Activated CD4-positive, alpha-beta T cell treated with anti-CD3 and anti-CD28 coated beads for 36 hours (primary cell): ENCODE measurements at regions of chr2 and their contacts with region 1.

Region 1: DNA sequence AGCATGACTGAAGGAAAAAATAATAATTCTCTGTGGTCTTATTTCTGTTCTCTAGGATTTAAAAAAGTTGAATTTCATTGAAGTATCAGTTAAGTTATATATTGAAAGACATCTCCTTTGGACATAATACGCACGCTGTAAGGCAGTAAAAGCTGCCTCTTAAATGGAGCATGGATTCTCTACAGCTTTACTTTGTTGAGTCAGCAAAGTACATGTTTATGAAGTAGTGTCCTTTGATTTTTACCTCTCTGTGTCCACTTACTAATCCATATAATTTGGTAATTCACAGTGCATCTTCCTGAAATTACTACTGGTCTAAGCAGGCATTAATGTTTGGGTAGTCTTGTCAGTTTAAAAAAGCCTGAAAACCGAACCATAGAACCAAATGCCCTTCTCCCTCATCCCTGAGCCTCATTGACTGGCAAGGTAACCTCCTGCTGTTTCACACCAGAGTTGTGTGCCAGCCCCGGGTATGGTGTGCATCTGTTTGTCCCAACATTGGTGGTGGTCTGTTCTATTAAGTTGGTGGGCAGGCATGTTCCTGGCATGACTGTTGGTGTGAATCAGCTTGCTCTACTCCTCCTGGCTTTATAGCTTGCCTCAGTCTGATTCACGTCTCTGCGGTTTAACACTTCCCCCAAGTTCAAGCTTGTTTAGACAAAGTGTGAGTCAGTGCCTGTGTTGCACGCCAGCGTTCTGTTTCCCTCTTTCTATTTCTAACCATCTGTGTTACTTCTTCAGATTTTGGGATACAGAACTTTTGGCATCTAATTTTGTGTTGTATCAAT is 71.0 kb upstream of the ITM2C start:
- DNase-seq: peak; percentile 83
- ATAC-seq: peak; percentile 92
- H3K4me3 Mint-ChIP-seq: peak overlapping the region; percentile 66
- H3K27ac Mint-ChIP-seq: no peak overlapping the region
- H3K4me1 Mint-ChIP-seq: peaks cover 59% of the 10 kb centered on the region
- H3K27me3 Mint-ChIP-seq: no peaks in the 10 kb centered on the region

Region 2: DNA sequence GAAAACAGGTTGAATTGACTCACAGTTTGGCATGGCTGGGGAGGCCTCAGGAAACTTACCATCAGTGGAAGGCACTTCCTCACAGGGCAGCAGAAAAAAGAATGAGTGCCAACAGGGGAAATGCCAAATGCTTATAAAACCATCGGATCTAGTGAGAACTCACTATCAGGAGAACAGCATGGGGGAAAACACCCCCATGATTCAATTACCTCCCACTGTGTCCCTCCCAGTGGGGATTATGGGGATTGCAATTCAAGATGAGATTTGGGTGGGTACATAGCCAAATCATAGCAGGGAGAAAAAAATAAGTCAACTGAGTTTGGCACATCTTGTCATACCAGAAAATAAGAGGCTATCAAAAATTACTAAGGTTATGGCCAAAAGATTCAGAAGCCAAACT is 968.3 kb before region 1 on chr2:
- CTCF ChIA-PET with region 1: no interaction called
- POLR2A ChIA-PET with region 1: no interaction called
- intact Hi-C with region 1: loop called in 1 of 2 experiments (anchors 1 kb)
- DNase-seq: no peak
- ATAC-seq: no peak
- H3K4me3 Mint-ChIP-seq: no peak overlapping the region
- H3K27ac Mint-ChIP-seq: no peak overlapping the region
- H3K4me1 Mint-ChIP-seq: peaks cover 21% of the 10 kb centered on the region
- H3K27me3 Mint-ChIP-seq: no peaks in the 10 kb centered on the region

Region 3: GRCh38 chr2:230403746-230404145 is 390.0 kb before region 1 on chr2:
- CTCF ChIA-PET with region 1: no interaction called
- POLR2A ChIA-PET with region 1: no interaction called
- intact Hi-C with region 1: no loop called
- DNase-seq: no peak
- ATAC-seq: no peak
- H3K4me3 Mint-ChIP-seq: no peak overlapping the region
- H3K27ac Mint-ChIP-seq: no peak overlapping the region
- H3K4me1 Mint-ChIP-seq: peaks cover 10% of the 10 kb centered on the region
- H3K27me3 Mint-ChIP-seq: no peaks in the 10 kb centered on the region

Region 4: DNA sequence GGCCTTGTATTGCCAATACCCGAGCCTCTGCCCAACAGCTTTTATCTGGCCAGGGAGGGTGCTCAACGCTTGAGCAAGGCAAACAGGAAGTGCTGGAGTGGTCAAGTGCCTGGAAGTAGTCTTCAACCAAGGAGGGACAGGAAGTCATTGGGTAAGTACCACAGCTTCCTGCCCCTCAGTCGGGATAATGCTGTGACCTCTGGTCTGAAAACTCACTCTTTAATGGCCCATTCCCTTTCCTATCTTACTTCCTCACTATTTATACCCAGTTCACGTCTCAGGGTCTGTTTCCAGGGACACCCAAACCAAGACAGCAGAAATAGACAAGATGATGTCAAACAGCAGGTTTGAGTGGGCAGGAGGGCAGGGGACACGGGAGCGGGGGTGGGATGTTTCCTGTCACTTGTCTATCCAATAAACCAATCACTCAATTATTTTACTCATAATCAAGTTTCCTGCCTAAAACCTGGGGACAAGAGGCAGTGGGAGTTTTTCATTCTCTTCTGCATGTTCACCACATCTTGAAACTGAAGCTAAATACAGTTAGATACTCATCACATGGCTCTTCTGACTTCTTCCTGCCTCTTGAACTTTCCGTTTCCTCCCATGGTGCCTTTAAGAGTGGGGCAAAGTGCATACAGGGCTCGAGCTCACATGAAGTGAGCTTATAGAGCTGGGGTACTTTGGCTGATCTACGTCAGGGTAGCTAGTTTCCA is 150.0 kb before region 1 on chr2:
- CTCF ChIA-PET with region 1: interaction called, 4 read pairs
- POLR2A ChIA-PET with region 1: interaction called, 10 read pairs
- intact Hi-C with region 1: loop called in 1 of 2 experiments (anchors 1 kb)
- DNase-seq: peak; percentile 84
- ATAC-seq: peak; percentile 94
- H3K4me3 Mint-ChIP-seq: peak overlapping the region; percentile 24
- H3K27ac Mint-ChIP-seq: peak overlapping the region; percentile 97
- H3K4me1 Mint-ChIP-seq: peaks cover 39% of the 10 kb centered on the region
- H3K27me3 Mint-ChIP-seq: no peaks in the 10 kb centered on the region

Region 5: GRCh38 chr2:230751062-230751461 is 42.7 kb before region 1 on chr2:
- CTCF ChIA-PET with region 1: interaction called, 5 read pairs
- POLR2A ChIA-PET with region 1: interaction called, 3 read pairs
- intact Hi-C with region 1: loop called (anchors 1 kb)
- DNase-seq: no peak
- ATAC-seq: peak; percentile 84
- H3K4me3 Mint-ChIP-seq: no peak overlapping the region
- H3K27ac Mint-ChIP-seq: no peak overlapping the region
- H3K4me1 Mint-ChIP-seq: peaks cover 75% of the 10 kb centered on the region
- H3K27me3 Mint-ChIP-seq: no peaks in the 10 kb centered on the region

Region 6: GRCh38 chr2:230767862-230768388 is 25.8 kb before region 1 on chr2:
- CTCF ChIA-PET with region 1: interaction called, 12 read pairs
- POLR2A ChIA-PET with region 1: interaction called, 6 read pairs
- intact Hi-C with region 1: loop called in 1 of 2 experiments (anchors 2 kb)
- DNase-seq: no peak
- ATAC-seq: peak; percentile 50
- H3K4me3 Mint-ChIP-seq: no peak overlapping the region
- H3K27ac Mint-ChIP-seq: peak overlapping the region; percentile 61
- H3K4me1 Mint-ChIP-seq: peaks cover 82% of the 10 kb centered on the region
- H3K27me3 Mint-ChIP-seq: no peaks in the 10 kb centered on the region

Region 7: GRCh38 chr2:230781130-230781797 is 12.5 kb before region 1 on chr2:
- CTCF ChIA-PET with region 1: interaction called, 24 read pairs
- POLR2A ChIA-PET with region 1: interaction called, 6 read pairs
- intact Hi-C with region 1: loop called (anchors 2 kb)
- DNase-seq: peak; percentile 66
- ATAC-seq: peak; percentile 94
- H3K4me3 Mint-ChIP-seq: no peak overlapping the region
- H3K27ac Mint-ChIP-seq: peak overlapping the region; percentile 86
- H3K4me1 Mint-ChIP-seq: peaks cover 84% of the 10 kb centered on the region
- H3K27me3 Mint-ChIP-seq: no peaks in the 10 kb centered on the region